ENCODE measurements at regions of chr3 and their contacts with region 1.

Region 1: DNA sequence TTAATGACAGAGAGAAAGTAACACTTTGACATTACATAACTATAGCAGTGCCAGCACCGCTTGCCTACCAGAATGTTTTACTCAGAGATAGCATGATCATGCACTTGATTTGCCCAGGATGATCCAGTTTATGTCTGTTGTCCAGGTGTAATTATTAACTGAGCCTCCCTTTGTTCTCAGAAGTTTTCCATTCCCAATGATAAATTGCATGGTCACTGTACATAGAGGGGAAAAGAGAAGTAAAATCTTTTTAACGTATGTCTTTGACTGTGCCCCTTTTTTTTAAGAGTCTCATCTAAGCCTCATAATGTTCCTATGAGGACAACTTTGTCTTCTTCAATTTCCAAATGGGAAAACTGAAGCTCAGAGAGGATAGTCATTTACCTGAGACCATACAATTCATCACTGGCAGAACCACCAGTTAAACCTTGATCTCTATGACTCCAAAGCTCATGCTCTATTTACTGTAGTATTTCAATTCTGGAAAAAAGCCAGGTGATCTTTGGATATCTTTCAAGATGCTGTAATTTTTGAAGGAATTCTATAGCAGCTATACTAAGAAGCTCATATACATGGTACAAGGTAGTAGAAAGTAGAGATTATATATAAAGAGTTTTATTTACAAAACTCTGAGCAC is 25.1 kb downstream of the C3orf85 start:
- DNase-seq: no peak

Region 2: GRCh38 chr3:108669208-108669607 is 492.4 kb before region 1 on chr3:
- intact Hi-C with region 1: no loop called
- DNase-seq: no peak

Region 3: DNA sequence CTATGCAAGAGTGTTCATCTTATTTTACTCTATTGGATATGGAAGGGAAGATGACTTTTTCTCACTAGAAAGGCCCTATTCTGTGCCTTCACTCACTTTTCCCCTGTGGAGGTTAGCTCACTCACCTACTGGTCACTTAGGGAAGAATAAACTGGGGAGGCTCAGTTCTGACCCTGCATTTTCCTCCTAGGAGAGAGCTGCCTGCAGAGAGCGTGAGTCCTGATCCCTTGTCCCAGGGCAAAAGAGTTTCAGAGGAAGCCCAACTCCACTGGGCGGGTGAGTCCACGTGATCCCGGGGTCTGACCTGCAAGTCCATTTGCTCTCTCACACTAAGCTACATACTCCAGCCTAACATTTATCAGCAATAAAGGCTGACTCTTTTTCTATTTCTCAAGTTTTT is 52.0 kb before region 1 on chr3:
- intact Hi-C with region 1: no loop called
- DNase-seq: no peak

Region 4: DNA sequence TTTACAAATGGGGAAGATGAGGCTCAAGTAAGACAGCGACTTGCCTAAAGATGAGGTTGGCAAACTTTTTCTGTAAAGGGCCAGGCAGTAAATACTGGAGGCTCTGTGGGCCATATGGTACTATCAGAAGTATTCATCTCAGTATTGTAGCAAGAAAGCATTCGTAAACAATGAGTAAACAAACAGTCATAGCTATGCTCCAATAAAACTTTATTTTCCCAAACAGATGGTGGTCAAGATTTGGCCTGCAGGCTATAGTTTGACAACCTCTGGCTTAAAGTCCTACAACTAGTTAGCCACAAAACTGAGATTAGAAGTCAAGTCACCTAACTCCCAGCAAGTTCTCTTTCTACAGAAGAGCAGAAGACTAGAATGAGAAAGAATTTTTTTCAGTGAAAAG is 1733.0 kb after region 1 on chr3:
- intact Hi-C with region 1: loop called in 1 of 2 experiments (anchors 10 kb)
- DNase-seq: no peak

Measured in posterior vena cava (tissue), 2 donors.